Calu3 (cell line): ENCODE measurements at regions of chr3 and their contacts with region 1.

Region 1: DNA sequence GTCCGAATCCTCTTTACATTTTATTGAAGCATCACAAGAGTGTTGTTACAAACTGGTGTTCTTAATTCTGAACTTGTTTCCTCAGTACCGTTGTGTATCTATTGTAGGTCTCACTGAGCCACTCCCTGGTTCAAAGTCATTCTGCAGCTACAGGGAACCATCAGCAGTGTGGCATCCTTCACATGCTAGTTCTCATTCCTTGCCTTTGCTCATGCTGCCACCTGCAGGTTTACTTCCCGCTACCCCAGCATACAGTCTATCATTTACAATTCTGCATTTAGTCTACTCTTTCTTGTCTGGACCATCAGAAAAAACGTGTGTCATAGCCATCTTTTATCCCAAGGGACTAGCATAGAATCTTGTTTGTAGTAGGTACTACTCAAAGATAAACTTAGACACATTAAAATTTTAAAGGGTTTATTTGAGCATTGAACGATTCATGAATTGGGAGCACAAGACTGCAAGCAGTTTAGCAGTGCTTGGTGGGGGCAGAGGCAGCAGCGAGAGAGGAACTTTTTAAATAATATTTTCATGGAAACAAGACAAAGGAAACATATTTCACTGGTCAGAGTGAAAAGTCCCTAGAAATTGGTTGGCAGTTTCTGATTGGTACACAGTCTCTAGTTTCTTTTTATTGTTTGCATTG is 402.1 kb downstream of the CADM2 start:
- DNase-seq: peak; percentile 70
- H3K4me3 Mint-ChIP-seq: no peak overlapping the region
- H3K27ac Mint-ChIP-seq: no peak overlapping the region
- H3K4me1 Mint-ChIP-seq: peaks cover 10% of the 10 kb centered on the region
- H3K27me3 Mint-ChIP-seq: no peaks in the 10 kb centered on the region
- CTCF ChIP-seq: peak; percentile 57

Region 2: DNA sequence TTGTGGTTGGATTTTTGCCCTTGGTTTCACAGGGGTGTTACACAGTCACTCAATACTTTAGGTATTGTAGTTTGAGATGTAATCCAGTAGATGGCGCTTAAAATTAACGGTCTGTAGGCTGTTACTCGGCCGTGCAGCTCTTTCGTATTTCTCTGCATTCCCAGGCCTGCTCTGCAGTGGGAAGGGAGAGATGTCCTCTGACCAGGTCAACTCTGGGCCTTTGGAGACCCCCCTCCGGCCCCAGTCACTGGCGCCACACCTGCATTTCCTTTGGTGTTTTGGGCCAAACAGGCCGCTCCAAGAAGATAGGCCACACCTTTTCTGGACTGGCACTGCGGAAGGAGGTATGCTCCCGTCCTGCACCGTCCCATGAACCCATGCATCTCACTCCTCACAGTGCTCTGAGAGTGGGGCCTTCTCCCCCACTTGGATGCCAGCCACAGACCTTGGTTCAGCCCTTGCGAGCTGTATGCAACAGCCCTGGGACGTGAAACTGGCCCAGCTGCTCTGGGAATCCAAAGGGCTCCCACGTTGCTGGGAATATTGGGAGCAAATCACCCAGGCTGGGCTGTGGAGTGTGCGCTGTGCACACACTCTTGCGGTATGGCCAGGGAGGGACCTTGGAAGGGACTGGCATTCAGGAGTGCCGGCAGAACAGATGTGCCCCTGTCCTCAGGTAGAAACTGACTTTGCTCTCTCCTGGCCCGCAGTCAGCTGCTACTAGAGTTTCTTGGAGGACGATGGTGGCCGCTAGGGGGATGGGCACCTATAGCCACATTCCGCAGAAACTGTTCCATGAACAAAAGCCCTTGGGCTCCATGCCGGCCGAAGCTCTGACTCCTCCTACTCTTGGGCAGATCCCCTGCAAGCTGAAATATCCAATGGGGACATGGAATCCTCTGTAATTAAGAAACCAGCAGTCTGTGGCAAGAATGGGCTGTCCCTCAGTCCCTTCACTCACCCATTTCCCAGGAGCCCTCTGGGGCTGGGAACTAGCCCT is 812.6 kb before region 1 on chr3:
- CTCF ChIA-PET with region 1: no interaction called
- intact Hi-C with region 1: loop called (anchors 5 kb)
- DNase-seq: peak; percentile 13
- H3K4me3 Mint-ChIP-seq: no peak overlapping the region
- H3K27ac Mint-ChIP-seq: no peak overlapping the region
- H3K4me1 Mint-ChIP-seq: no peaks in the 10 kb centered on the region
- H3K27me3 Mint-ChIP-seq: no peaks in the 10 kb centered on the region
- CTCF ChIP-seq: peak; percentile 41

Region 3: DNA sequence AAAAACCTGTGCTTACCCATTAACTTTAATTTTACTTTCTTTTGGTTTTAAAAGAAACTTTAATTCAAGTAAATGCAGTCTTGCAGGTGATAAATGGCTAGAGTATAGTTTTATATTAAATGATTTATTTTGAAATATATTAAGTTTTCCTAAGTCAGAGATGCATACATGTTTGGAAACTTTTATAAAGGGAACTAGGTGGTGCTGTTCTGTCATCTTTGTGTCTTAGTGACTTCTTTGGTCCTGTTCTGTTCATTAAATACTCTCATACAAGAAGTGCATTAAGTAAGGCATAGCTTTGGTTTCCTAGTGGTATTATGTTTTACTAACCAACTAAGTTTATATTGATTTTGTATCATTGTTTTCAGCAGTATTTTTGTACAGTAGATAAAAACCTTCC is 386.5 kb before region 1 on chr3:
- CTCF ChIA-PET with region 1: no interaction called
- intact Hi-C with region 1: loop called (anchors 5 kb)
- DNase-seq: no peak
- H3K4me3 Mint-ChIP-seq: no peak overlapping the region
- H3K27ac Mint-ChIP-seq: no peak overlapping the region
- H3K4me1 Mint-ChIP-seq: no peaks in the 10 kb centered on the region
- H3K27me3 Mint-ChIP-seq: no peaks in the 10 kb centered on the region
- CTCF ChIP-seq: no peak

Region 4: DNA sequence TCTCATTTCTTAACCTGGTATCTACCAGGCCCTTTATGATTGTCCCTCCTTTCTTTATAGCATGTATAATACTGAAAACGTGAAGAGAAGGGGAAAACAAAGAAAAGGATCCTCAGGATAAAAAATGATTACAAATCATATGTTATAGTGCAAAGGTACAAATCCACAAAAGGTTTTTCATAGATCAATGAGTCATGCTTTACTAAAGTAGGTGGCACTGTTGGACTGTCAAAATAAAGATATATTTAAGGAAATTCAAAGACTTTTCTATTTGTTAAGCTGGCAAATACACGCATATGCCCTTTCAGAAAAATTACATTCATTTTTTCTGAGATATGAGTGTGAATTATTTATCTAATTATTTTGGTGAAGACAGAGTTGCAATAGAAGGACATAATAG is 250.5 kb before region 1 on chr3:
- CTCF ChIA-PET with region 1: interaction called, 7 read pairs
- intact Hi-C with region 1: loop called (anchors 1 kb)
- DNase-seq: no peak
- H3K4me3 Mint-ChIP-seq: no peak overlapping the region
- H3K27ac Mint-ChIP-seq: peak overlapping the region; percentile 34
- H3K4me1 Mint-ChIP-seq: peaks cover 13% of the 10 kb centered on the region
- H3K27me3 Mint-ChIP-seq: no peaks in the 10 kb centered on the region
- CTCF ChIP-seq: no peak

Region 5: GRCh38 chr3:85576091-85576690 is 215.3 kb after region 1 on chr3:
- CTCF ChIA-PET with region 1: no interaction called
- intact Hi-C with region 1: loop called (anchors 5 kb)
- DNase-seq: peak; percentile 59
- H3K4me3 Mint-ChIP-seq: no peak overlapping the region
- H3K27ac Mint-ChIP-seq: no peak overlapping the region
- H3K4me1 Mint-ChIP-seq: peaks cover 19% of the 10 kb centered on the region
- H3K27me3 Mint-ChIP-seq: no peaks in the 10 kb centered on the region
- CTCF ChIP-seq: peak; percentile 61

Region 6: DNA sequence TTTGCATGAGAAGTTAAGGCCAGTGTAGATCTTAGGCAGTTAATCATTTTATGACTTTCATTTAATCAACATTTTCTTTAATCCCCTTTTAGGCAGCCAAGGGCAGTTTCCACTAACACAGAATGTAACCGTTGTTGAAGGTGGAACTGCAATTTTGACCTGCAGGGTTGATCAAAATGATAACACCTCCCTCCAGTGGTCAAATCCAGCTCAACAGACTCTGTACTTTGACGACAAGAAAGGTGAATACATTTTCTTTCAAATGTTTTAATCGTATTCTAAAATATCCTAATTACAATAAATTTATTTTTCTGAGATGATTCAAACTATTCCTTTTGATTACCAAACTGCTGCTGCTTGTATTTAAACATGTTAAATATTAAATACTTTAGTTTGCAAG is 441.1 kb after region 1 on chr3:
- CTCF ChIA-PET with region 1: no interaction called
- intact Hi-C with region 1: loop called (anchors 10 kb)
- DNase-seq: peak; percentile 41
- H3K4me3 Mint-ChIP-seq: no peak overlapping the region
- H3K27ac Mint-ChIP-seq: no peak overlapping the region
- H3K4me1 Mint-ChIP-seq: no peaks in the 10 kb centered on the region
- H3K27me3 Mint-ChIP-seq: no peaks in the 10 kb centered on the region
- CTCF ChIP-seq: peak; percentile 20